AG04449 (cell line): ENCODE measurements at regions of chr3 and their contacts with region 1.

Region 1: GRCh38 chr3:11060500-11061251 is 68.1 kb downstream of the SLC6A1 start:
- DNase-seq: no peak
- H3K4me3 ChIP-seq: peak overlapping the region; percentile 27; the same call in 1 of the 2 replicates
- CTCF ChIP-seq: peak; percentile 91

Region 2: GRCh38 chr3:10334459-10334858 is 726.2 kb before region 1 on chr3:
- CTCF ChIA-PET with region 1: no interaction called
- POLR2A ChIA-PET with region 1: no interaction called
- DNase-seq: no peak
- H3K4me3 ChIP-seq: no peak overlapping the region
- CTCF ChIP-seq: peak; percentile 28

Region 3: GRCh38 chr3:10772271-10773161 is 288.2 kb before region 1 on chr3:
- CTCF ChIA-PET with region 1: interaction called, 13 read pairs
- POLR2A ChIA-PET with region 1: no interaction called
- DNase-seq: no peak
- H3K4me3 ChIP-seq: no peak overlapping the region
- CTCF ChIP-seq: no peak

Region 4: DNA sequence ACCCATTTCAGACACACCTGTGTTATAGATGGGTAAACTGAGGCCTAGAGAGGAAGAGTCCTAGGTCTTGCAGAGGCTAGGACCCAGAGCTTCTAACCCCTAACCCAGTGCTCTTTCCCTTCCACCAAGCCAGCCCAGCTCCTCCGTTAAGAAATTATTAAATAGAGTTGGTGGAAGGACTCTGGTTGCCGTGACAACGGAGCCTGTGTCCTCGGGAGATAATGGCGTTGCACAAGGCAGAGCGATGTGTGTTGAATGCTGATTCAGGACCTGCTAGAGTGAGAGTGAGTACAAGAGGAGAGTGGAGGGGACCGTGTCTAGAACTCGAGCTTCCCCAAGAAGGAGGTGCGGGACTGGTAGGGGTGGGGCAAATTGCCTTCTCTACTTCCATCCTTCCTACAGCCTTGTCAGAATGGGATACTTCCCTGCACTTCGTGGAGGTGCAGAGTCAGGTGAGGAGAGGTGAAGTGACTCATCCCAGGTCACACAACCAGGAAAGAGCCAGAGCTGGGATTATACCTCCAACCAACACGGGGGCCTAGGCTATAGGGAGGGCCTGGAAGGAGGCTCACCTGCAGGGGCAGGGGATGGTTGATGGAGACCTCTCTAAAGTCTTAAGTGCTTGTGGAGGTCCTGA is 59.5 kb before region 1 on chr3:
- CTCF ChIA-PET with region 1: interaction called, 10 read pairs
- POLR2A ChIA-PET with region 1: no interaction called
- DNase-seq: no peak
- H3K4me3 ChIP-seq: no peak overlapping the region
- CTCF ChIP-seq: no peak

Region 5: GRCh38 chr3:11085093-11085840 is 24.6 kb after region 1 on chr3:
- CTCF ChIA-PET with region 1: interaction called, 13 read pairs
- POLR2A ChIA-PET with region 1: interaction called, 4 read pairs
- DNase-seq: no peak
- H3K4me3 ChIP-seq: no peak overlapping the region
- CTCF ChIP-seq: no peak

Region 6: GRCh38 chr3:11145888-11146287 is 85.2 kb after region 1 on chr3:
- CTCF ChIA-PET with region 1: interaction called, 22 read pairs
- POLR2A ChIA-PET with region 1: no interaction called
- DNase-seq: peak; percentile 79
- H3K4me3 ChIP-seq: no peak overlapping the region
- CTCF ChIP-seq: no peak

Region 7: DNA sequence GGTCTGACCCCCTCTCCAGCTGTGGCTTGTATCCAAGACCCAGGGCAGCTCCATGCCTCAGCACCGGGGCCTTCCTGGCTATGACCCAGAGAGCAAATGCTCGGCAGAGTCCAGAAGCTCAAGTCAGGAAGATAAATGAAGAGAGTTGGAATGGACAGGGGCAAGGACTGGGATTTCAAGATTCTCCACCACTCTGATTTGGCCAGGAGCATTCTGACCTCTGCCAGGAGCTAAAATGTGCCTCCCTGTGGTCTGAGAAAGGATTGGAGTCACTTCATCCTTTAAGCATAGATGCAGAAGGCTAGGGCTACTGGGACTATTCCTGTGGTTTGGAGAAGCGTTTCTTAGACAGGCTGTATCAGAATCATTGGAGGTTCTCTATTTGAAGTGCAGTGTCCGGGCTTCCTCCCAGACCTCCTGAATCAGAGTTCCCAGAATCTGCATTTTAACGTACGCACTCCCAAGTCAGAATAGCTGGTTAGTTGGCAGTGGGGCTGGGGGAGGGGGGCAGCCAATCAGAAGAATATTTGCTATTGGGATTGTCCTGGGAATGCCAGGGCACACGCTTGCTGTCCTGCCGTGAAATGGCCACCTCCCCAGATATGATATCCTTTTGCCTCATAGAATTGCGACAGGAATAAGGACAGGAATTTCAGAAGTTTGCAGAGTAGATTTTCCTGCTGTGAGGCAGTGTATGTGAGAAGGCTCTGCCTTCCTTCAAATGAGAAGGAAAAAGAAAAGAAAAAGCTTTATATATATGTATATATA is 151.0 kb after region 1 on chr3:
- CTCF ChIA-PET with region 1: interaction called, 65 read pairs
- POLR2A ChIA-PET with region 1: no interaction called
- DNase-seq: no peak
- H3K4me3 ChIP-seq: peak overlapping the region; percentile 13; the same call in 1 of the 2 replicates
- CTCF ChIP-seq: peak; percentile 36